GM12878 (cell line): ENCODE measurements at regions of chr10 and their contacts with region 1.

Region 1: DNA sequence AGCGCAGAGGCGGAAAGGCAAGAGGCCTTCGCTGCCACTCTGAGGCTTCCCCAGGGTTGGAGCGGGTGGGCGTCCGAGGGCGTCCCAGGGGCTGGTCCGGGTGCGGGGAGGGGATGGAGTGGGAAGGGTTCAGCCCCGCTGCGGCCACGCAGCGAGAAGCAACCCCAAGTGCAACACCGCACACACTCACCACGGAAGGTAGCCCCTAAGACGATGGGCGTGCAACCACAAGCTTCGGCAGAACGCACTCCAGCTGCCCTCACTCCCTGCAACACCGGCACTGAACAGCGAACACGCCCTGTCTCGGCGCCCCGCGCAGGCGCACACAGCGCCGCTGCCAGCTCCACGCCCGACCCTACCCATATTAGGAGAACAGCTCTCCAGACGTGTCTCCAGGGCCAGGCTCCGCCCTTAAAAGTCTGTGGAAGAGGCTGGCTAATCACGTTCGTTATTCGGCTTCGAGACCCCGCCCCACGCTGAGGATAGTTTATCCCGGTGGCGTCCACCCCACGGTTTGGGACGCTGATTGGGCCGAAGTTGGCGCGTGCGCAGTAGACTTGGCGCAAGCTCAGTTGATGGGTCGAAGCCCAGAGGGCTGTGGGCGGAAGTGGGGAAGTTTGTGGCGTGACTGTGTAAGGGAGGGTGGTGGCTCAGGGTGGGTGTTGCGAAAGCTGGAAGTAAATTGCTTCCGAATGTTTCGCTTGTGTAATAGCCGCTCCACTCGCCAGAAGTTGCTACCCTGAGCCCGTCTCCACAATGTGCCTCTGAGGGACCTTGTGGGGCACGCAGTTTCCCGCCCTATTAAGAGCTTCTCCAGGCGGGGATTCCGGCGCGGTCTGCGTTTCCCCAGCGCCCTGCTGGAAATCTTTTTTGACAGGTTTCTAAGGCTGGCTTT is at the start of gene RSU1:
- DNase-seq: peak; percentile 98
- ATAC-seq: peak; percentile 97
- H3K4me3 ChIP-seq: peak within 1 kb of the TSS; percentile 85
- H3K27ac ChIP-seq: peak within 1 kb of the TSS; percentile 78
- H3K4me1 ChIP-seq: no peaks in the 10 kb centered on the region
- H3K27me3 ChIP-seq: no peaks in the 10 kb centered on the region; a peak in 1 of 4 replicates
- CTCF ChIP-seq: no peak
- EP300 ChIP-seq: no peak
- POLR2A ChIP-seq: peak; percentile 89
- RAD21 ChIP-seq: no peak
- polyA plus RNA-seq, gene RSU1: 80.7 to 139 TPM

Region 2: GRCh38 chr10:16436758-16437539 is 380.4 kb before region 1 on chr10 and contains the start of gene PTER:
- CTCF ChIA-PET with region 1: no interaction called
- POLR2A ChIA-PET with region 1: interaction called, 5 read pairs
- RAD21 ChIA-PET with region 1: interaction called, 5 read pairs
- SMC1A ChIA-PET with region 1: no interaction called
- in situ Hi-C with region 1: no loop called
- intact Hi-C with region 1: loop called (anchors 5 kb)
- DNase-seq: peak; percentile 89
- ATAC-seq: peak; percentile 97
- H3K4me3 ChIP-seq: peak within 1 kb of the TSS; percentile 80
- H3K27ac ChIP-seq: peak within 1 kb of the TSS; percentile 87
- H3K4me1 ChIP-seq: peaks cover 20% of the 10 kb centered on the region
- H3K27me3 ChIP-seq: no peaks in the 10 kb centered on the region
- CTCF ChIP-seq: no peak
- EP300 ChIP-seq: no peak
- POLR2A ChIP-seq: peak; percentile 86
- RAD21 ChIP-seq: no peak
- polyA plus RNA-seq, gene PTER: 18.4 to 29.4 TPM

Region 3: GRCh38 chr10:16799621-16800020 is 17.8 kb before region 1 on chr10:
- CTCF ChIA-PET with region 1: interaction called, 16 read pairs
- POLR2A ChIA-PET with region 1: interaction called, 4 read pairs
- RAD21 ChIA-PET with region 1: interaction called, 5 read pairs
- SMC1A ChIA-PET with region 1: interaction called, 12 read pairs
- in situ Hi-C with region 1: no loop called
- intact Hi-C with region 1: no loop called
- DNase-seq: peak; percentile 45
- ATAC-seq: peak; percentile 95
- H3K4me3 ChIP-seq: peak overlapping the region; percentile 23
- H3K27ac ChIP-seq: peak overlapping the region; percentile 67
- H3K4me1 ChIP-seq: peaks cover 12% of the 10 kb centered on the region
- H3K27me3 ChIP-seq: no peaks in the 10 kb centered on the region
- CTCF ChIP-seq: no peak
- EP300 ChIP-seq: peak in 1 of 2 experiments; percentile 34; a peak in 1 of 4 replicates
- POLR2A ChIP-seq: no peak
- RAD21 ChIP-seq: no peak

Region 4: DNA sequence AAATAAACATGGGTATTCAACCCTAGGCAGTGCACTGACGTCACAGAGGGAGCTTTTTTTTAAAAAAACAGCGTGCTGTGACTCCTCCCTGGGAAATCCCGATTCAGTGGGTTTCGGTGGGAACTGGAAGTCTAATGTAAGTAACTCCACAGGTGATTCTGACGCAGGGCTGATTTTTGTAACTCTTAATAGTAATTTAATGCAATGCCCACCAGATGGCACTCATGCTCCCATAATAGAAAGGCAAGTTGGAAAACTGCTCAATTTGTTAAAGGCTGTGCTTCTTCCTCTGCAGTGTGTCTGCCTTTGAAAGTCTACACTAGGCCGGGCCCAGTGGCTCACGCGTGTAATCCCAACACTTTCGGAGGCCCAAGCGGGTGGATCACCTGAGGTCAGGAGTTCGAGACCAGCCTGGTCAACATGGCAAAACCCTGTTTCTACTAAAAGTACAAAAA is 10.8 kb after region 1 on chr10:
- CTCF ChIA-PET with region 1: interaction called, 12 read pairs
- POLR2A ChIA-PET with region 1: interaction called, 3 read pairs
- RAD21 ChIA-PET with region 1: no interaction called
- SMC1A ChIA-PET with region 1: interaction called, 3 read pairs
- in situ Hi-C with region 1: no loop called
- intact Hi-C with region 1: no loop called
- DNase-seq: peak; percentile 48
- ATAC-seq: peak; percentile 90
- H3K4me3 ChIP-seq: no peak overlapping the region
- H3K27ac ChIP-seq: no peak overlapping the region
- H3K4me1 ChIP-seq: no peaks in the 10 kb centered on the region
- H3K27me3 ChIP-seq: no peaks in the 10 kb centered on the region
- CTCF ChIP-seq: peak; percentile 50 to 60 (median 51); a peak in 5 of 6 replicates
- EP300 ChIP-seq: no peak
- POLR2A ChIP-seq: no peak
- RAD21 ChIP-seq: peak; percentile 67

Region 5: GRCh38 chr10:18066947-18067346 is 1249.6 kb after region 1 on chr10:
- CTCF ChIA-PET with region 1: no interaction called
- POLR2A ChIA-PET with region 1: no interaction called
- RAD21 ChIA-PET with region 1: no interaction called
- SMC1A ChIA-PET with region 1: no interaction called
- in situ Hi-C with region 1: no loop called
- intact Hi-C with region 1: no loop called
- DNase-seq: no peak
- ATAC-seq: no peak
- H3K4me3 ChIP-seq: no peak overlapping the region
- H3K27ac ChIP-seq: no peak overlapping the region
- H3K4me1 ChIP-seq: no peaks in the 10 kb centered on the region
- H3K27me3 ChIP-seq: no peaks in the 10 kb centered on the region
- CTCF ChIP-seq: no peak
- EP300 ChIP-seq: no peak
- POLR2A ChIP-seq: no peak
- RAD21 ChIP-seq: no peak